ENCODE measurements at regions of chrX and their contacts with region 1.

Region 1: DNA sequence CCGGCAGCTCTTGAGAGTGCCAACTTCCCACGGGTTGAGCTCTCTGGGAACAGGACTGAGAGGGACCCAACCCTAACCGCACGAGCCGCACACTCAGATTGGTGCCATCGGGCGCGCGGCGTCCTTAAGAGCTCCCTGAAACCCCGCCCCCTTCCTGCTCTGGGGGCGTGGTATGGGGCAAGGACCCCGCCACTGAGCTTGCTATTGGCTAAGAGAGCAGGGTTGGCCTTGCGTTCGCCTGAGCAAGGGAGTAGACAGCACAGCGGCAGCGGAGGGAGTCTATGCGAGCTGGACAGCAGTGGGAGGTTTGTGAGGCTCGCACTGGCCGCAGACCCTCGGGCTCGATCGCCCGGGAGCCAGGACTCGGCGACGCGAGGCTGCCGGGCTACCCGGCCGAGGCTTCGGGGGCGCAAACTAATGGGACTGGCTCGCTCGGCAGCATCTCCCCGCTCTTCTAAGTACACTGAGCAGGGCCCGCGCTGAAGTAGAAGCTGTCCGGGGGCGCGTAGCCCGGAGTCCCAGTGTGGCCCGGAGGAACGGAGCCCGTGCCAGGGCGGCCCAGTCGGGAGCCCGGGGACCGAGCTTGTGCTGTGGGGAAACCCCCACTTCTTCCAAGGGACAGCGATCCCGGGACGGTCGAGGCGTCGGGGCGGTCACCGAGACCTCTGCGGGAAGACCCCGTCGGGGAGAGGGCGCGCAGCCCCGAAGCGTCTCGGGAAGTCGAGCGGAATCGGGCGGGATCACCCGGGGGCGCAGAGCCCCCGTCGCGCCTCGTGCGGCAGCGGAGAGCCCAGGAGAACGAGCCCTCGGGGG is at the start of gene EFNB1:
- DNase-seq: peak; percentile 87
- ATAC-seq: peak; percentile 85
- H3K4me3 Mint-ChIP-seq: peak within 1 kb of the TSS; percentile 72
- H3K27ac Mint-ChIP-seq: no peak within 1 kb of the TSS
- H3K4me1 Mint-ChIP-seq: peaks cover 19% of the 10 kb centered on the region
- H3K27me3 Mint-ChIP-seq: peaks cover 99% of the 10 kb centered on the region
- CTCF ChIP-seq: no peak
- total RNA-seq, gene EFNB1: 9.7 to 16.4 TPM (median 10.0 TPM) in 3 replicates

Region 2: GRCh38 chrX:68732906-68733493 is 95.9 kb before region 1 on chrX:
- CTCF ChIA-PET with region 1: interaction called, 13 read pairs
- POLR2A ChIA-PET with region 1: interaction called, 3 read pairs
- DNase-seq: peak; percentile 78
- ATAC-seq: peak; percentile 85
- H3K4me3 Mint-ChIP-seq: no peak overlapping the region
- H3K27ac Mint-ChIP-seq: no peak overlapping the region
- H3K4me1 Mint-ChIP-seq: 0 out of 2 replicates have a peak, but pooled peaks cover 3% of the 10 kb centered on the region
- H3K27me3 Mint-ChIP-seq: no peaks in the 10 kb centered on the region; the same call in 1 of the 2 replicates
- CTCF ChIP-seq: peak; percentile 49; the same call in 1 of the 2 replicates

Region 3: DNA sequence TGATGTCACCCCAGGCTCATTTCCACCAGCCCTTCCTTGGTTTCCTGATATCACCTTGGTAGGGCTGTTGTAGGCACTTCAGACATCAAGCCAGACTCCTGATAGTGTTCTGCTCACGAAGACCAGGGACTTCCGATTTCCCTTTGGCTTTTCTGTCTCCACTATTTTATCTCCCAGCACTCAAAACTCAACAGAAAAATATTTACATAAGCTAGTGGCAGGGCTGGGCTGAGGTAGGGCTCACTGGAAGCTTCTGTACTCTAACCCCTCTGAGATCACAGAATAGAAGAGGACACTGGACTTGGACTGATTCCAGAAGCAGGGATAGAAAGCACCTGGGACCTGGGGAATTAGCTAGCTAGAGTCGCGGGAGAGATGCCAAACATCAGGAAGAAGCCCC is 34.5 kb before region 1 on chrX:
- CTCF ChIA-PET with region 1: no interaction called
- POLR2A ChIA-PET with region 1: no interaction called
- DNase-seq: no peak
- ATAC-seq: no peak
- H3K4me3 Mint-ChIP-seq: no peak overlapping the region
- H3K27ac Mint-ChIP-seq: no peak overlapping the region
- H3K4me1 Mint-ChIP-seq: no peaks in the 10 kb centered on the region
- H3K27me3 Mint-ChIP-seq: peaks cover 14% of the 10 kb centered on the region
- CTCF ChIP-seq: no peak

Region 4: GRCh38 chrX:68894513-68895340 is 65.8 kb after region 1 on chrX:
- CTCF ChIA-PET with region 1: interaction called, 29 read pairs
- POLR2A ChIA-PET with region 1: interaction called, 3 read pairs
- DNase-seq: no peak
- ATAC-seq: peak; percentile 57
- H3K4me3 Mint-ChIP-seq: peak overlapping the region; percentile 42
- H3K27ac Mint-ChIP-seq: no peak overlapping the region
- H3K4me1 Mint-ChIP-seq: peaks cover 29% of the 10 kb centered on the region
- H3K27me3 Mint-ChIP-seq: peaks cover 37% of the 10 kb centered on the region
- CTCF ChIP-seq: no peak

Region 5: DNA sequence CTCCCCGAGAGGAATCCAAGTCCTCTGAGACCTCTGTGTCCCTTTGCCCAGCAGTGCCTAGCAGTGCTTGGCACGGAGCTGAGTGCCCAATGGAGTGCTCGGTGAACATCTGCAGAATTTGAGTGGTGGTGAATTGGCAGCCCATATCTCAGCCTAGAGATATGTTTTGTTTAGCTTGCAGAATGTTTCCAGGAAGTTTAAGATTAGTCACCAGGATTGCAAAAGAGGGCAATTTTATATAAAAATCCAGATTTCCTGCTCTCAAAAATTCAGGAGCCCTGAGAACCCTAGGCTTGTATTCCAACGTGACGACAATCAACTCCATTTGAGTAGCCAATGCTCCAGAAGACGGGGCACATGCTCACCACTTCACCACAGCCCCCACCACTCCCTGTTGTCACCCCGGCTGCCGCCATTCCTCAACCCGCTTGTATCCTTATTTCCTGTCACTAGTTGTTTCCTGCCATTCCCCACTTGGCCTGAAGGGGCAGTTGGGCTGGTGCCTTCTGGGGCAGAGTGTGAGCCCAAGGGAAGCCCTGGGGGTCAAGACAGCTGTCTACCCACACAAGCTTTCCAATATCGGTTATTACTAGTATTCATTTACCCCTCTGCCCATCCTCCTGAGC is 116.8 kb after region 1 on chrX:
- CTCF ChIA-PET with region 1: interaction called, 23 read pairs
- POLR2A ChIA-PET with region 1: no interaction called
- DNase-seq: peak; percentile 64
- ATAC-seq: peak; percentile 89
- H3K4me3 Mint-ChIP-seq: no peak overlapping the region
- H3K27ac Mint-ChIP-seq: no peak overlapping the region
- H3K4me1 Mint-ChIP-seq: no peaks in the 10 kb centered on the region
- H3K27me3 Mint-ChIP-seq: peaks cover 3% of the 10 kb centered on the region; the same call in 1 of the 2 replicates
- CTCF ChIP-seq: 0 out of 2 replicates have a peak, but pooled peaks have one; percentile 24

Region 6: GRCh38 chrX:69021141-69021960 is 192.4 kb after region 1 on chrX:
- CTCF ChIA-PET with region 1: interaction called, 11 read pairs
- POLR2A ChIA-PET with region 1: no interaction called
- DNase-seq: no peak
- ATAC-seq: no peak; the same call in 1 of the 2 replicates
- H3K4me3 Mint-ChIP-seq: no peak overlapping the region
- H3K27ac Mint-ChIP-seq: no peak overlapping the region
- H3K4me1 Mint-ChIP-seq: peaks cover 4% of the 10 kb centered on the region; the same call in 1 of the 2 replicates
- H3K27me3 Mint-ChIP-seq: no peaks in the 10 kb centered on the region
- CTCF ChIP-seq: no peak

Region 7: DNA sequence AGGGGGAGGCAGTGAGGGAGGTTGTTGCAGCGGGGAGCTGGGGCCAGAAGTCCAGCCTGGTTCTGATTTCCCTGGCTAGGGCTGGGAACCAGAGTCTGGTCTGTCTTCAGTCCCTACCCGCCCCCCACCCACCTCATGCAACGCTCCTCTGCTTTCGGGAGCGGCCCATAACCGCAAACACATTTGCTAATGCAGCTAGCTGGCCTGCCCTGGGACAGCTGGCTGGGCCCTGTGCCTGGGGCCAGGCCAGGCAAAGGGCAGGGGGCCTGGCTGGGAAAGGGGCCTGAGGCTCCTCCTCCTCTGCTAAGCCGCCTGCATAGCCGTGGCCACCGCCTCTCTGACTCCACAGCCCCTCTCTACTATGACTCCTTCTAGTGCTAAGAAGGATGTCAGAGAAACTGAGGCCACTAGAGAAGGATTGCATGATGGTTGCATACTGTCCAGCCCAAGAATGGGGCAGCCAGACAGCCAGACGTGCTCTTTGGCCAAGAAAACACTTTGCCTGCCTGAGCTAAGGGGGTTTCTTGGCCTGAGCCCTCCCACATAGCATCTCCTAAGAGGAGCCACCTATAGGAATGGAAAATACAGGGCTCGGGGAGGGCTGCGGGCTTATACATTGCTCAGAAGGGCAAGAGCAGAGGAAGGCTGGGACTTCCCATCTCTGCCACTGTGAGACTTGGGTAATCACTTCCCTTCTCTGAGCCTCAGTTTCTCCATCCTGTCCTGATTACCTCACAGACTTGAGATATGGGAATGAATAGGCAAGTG is 259.4 kb after region 1 on chrX:
- CTCF ChIA-PET with region 1: interaction called, 24 read pairs
- POLR2A ChIA-PET with region 1: no interaction called
- DNase-seq: no peak
- ATAC-seq: peak; percentile 85
- H3K4me3 Mint-ChIP-seq: no peak overlapping the region
- H3K27ac Mint-ChIP-seq: no peak overlapping the region
- H3K4me1 Mint-ChIP-seq: peaks cover 6% of the 10 kb centered on the region; the same call in 1 of the 2 replicates
- H3K27me3 Mint-ChIP-seq: no peaks in the 10 kb centered on the region
- CTCF ChIP-seq: no peak

Region 8: DNA sequence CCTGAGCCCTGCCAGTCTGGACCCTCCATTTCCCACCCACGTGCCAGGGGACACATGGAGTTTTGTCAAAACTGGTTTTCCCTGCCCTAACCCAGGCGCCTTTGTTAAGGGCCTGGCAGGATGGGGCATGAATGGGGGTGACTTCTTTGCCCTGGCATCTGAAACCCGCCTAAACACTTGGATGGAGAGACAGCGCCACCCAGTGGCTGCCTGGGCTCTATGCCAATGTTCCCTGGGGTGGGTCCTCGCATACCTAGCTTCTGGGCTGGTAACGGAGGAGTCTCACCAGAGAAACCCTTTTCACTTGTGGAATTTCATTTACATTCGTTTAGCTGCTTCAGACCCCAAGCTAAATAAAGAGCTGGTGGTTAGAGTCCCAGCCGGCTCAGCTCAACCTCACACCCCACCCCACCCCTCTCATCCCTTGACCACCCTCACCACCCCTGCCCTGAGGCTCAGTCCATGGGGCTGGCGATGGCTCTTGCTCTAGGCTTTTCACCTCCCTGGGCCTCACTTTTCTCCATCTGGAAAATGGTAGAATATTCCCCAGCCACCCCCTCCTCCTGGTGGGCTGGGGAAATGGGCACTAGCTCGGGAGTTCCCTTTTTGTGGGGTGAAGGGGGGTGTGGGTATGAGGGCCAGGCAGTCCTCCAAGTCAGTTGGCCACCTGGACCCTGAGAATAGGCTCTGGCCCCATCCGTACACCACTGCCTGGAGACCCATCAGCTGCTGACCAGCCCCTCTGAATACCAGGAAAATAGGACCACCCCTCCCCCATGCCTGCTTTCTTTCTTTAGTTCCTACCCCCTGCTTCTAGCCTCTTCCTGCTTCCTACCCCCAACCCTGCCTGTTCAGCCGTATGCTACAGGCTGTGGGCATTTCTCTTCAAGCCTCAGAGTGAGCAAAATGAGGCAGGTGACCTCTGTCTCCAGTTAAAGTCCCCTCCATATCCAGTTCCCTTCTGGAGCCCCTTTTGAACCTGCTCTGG is 393.5 kb after region 1 on chrX:
- CTCF ChIA-PET with region 1: interaction called, 107 read pairs
- POLR2A ChIA-PET with region 1: interaction called, 10 read pairs
- DNase-seq: peak; percentile 87
- ATAC-seq: peak; percentile 72
- H3K4me3 Mint-ChIP-seq: peak overlapping the region; percentile 43
- H3K27ac Mint-ChIP-seq: no peak overlapping the region
- H3K4me1 Mint-ChIP-seq: peaks cover 11% of the 10 kb centered on the region
- H3K27me3 Mint-ChIP-seq: peaks cover 51% of the 10 kb centered on the region
- CTCF ChIP-seq: peak; percentile 79

Measured in WTC11 (cell line).